ENCODE measurements at regions of chr14 and their contacts with region 1.

Region 1: GRCh38 chr14:54175298-54175942 is 218.8 kb upstream of the BMP4 start:
- DNase-seq: peak; percentile 85
- H3K4me3 Mint-ChIP-seq: no peak overlapping the region
- H3K27ac Mint-ChIP-seq: no peak overlapping the region
- H3K4me1 Mint-ChIP-seq: no peaks in the 10 kb centered on the region
- H3K27me3 Mint-ChIP-seq: peaks cover 41% of the 10 kb centered on the region

Region 2: GRCh38 chr14:52824507-52824906 is 1350.9 kb before region 1 on chr14:
- intact Hi-C with region 1: loop called (anchors 10 kb)
- DNase-seq: no peak
- H3K4me3 Mint-ChIP-seq: no peak overlapping the region
- H3K27ac Mint-ChIP-seq: no peak overlapping the region
- H3K4me1 Mint-ChIP-seq: peaks cover 5% of the 10 kb centered on the region
- H3K27me3 Mint-ChIP-seq: peaks cover 9% of the 10 kb centered on the region

Region 3: GRCh38 chr14:53432378-53432802 is 743.0 kb before region 1 on chr14:
- intact Hi-C with region 1: loop called (anchors 5 kb)
- DNase-seq: peak; percentile 58
- H3K4me3 Mint-ChIP-seq: no peak overlapping the region
- H3K27ac Mint-ChIP-seq: no peak overlapping the region
- H3K4me1 Mint-ChIP-seq: no peaks in the 10 kb centered on the region
- H3K27me3 Mint-ChIP-seq: peaks cover 3% of the 10 kb centered on the region

Region 4: GRCh38 chr14:53539489-53540126 is 635.8 kb before region 1 on chr14:
- intact Hi-C with region 1: loop called (anchors 5 kb)
- DNase-seq: peak; percentile 83
- H3K4me3 Mint-ChIP-seq: no peak overlapping the region
- H3K27ac Mint-ChIP-seq: no peak overlapping the region
- H3K4me1 Mint-ChIP-seq: no peaks in the 10 kb centered on the region
- H3K27me3 Mint-ChIP-seq: peaks cover 6% of the 10 kb centered on the region

Region 5: DNA sequence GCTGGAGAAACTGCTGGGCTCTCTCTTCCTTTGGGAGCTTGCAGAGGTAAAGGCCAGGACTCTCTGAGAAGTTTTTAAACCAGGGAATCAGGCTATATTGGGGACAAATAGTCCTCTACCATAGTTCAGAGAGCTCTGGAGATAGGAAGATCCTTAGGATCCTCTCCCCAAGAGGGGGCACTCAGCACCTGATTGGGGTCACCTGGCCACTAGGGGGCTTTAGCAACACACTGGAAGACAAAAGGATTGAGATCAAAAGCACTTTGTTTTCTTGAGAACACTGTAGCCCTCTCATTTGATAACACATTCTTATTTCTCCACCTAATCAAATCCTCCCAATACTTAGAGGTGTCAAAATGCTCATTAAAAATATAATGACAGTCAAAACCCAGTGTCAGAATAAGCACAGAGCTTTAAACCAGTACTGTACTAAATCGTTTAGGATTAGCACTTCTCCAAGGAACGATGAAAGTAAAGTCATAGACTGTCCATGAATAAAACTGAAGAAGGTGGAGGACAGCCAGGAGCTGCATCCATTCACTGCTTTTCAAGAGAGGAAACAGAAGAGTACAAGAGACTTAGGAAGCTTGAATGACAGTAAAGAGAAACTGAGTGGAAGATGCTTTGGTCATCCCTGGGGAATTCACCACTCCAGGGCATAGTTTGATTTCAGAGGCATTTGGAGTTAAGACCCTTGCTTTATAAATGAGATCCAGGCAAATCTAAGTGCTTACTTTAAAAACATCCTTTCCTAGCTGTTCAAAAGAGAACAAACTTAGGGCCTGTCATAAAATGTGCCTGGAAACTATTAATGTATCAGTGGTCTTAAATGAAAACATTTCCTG is 245.3 kb before region 1 on chr14:
- intact Hi-C with region 1: loop called (anchors 10 kb)
- DNase-seq: peak; percentile 66
- H3K4me3 Mint-ChIP-seq: no peak overlapping the region
- H3K27ac Mint-ChIP-seq: no peak overlapping the region
- H3K4me1 Mint-ChIP-seq: no peaks in the 10 kb centered on the region
- H3K27me3 Mint-ChIP-seq: peaks cover 2% of the 10 kb centered on the region

Region 6: GRCh38 chr14:54347997-54348611 is 172.7 kb after region 1 on chr14:
- intact Hi-C with region 1: loop called (anchors 10 kb)
- DNase-seq: peak; percentile 71
- H3K4me3 Mint-ChIP-seq: no peak overlapping the region
- H3K27ac Mint-ChIP-seq: no peak overlapping the region
- H3K4me1 Mint-ChIP-seq: peaks cover 2% of the 10 kb centered on the region
- H3K27me3 Mint-ChIP-seq: peaks cover 18% of the 10 kb centered on the region